Posterior cingulate gyrus (tissue), 11 donors: ENCODE measurements at regions of chr4 and their contacts with region 1.

Region 1: GRCh38 chr4:152640058-152640833 is 39.6 kb downstream of the TMEM154 start:
- DNase-seq: no peak

Region 2: GRCh38 chr4:152166567-152166966 is 473.7 kb before region 1 on chr4:
- intact Hi-C with region 1: no loop called
- DNase-seq: no peak

Region 3: DNA sequence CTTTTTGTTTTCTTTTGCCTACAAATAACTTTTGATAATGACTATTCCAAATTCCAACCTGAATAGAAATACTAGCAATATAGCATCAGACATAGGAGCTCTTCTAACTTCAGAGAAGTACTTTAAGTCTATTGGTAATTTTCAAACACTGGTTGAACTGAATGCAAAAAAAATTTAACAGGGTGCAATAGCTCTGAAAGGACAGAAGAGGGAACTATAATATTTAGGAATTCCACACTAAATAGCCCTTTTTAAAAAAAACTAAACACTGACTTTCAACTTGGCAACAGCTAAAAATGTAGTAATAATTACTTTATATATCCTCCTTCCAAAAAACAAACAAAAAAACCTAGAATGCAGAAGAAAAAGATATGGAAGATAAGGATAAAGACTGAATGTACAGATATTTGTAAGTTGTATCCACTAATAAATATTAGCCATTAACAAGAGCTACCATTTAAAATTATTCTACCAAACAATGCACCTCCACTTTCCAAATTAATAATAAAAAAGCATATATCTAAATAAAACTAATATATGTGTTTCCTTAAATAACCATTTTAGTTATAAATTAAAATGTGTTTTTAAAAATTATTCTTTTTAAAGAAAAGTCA is 185.7 kb before region 1 on chr4:
- intact Hi-C with region 1: loop called (anchors 1 kb)
- DNase-seq: no peak

Region 4: DNA sequence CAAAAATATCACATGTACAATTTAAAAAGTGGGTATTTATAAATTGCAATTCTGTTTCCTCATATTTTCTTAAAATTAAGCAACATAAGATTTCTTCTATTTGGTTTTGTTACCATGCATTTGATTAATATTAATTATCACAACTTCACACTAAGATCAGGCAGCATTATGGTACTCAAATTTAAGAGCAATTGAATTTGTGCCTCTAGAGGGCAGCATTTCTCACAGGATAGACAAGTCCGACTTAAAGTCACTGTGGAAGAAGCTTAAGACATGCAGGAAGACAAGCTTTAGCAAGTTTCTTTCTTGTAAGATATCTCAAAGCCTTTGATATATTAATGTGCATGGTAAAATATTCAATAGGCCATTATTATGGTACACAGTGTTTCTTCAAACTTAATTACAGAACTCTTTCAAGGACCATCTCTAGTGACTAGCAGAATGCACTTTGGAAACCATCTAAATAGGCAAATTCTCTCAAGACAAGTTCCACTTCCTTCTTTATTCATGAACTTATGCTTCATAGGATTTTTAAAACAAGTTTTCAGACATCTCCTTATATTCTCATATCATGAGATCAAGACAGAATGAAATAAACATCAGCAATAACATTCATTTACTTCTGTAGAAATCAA is 139.3 kb before region 1 on chr4:
- intact Hi-C with region 1: loop called (anchors 1 kb)
- DNase-seq: peak in 2 of 10 donors; percentile 9 to 31

Region 5: GRCh38 chr4:152585023-152585441 is 55.2 kb before region 1 on chr4:
- intact Hi-C with region 1: no loop called
- DNase-seq: no peak

Region 6: GRCh38 chr4:152735396-152735859 is 95.2 kb after region 1 on chr4:
- intact Hi-C with region 1: loop called (anchors 10 kb)
- DNase-seq: no peak

Region 7: GRCh38 chr4:152972821-152973628 is 332.8 kb after region 1 on chr4:
- intact Hi-C with region 1: no loop called
- DNase-seq: peak in 1 of 10 donors; percentile 74